ENCODE measurements at regions of chr9 and their contacts with region 1.

Region 1: DNA sequence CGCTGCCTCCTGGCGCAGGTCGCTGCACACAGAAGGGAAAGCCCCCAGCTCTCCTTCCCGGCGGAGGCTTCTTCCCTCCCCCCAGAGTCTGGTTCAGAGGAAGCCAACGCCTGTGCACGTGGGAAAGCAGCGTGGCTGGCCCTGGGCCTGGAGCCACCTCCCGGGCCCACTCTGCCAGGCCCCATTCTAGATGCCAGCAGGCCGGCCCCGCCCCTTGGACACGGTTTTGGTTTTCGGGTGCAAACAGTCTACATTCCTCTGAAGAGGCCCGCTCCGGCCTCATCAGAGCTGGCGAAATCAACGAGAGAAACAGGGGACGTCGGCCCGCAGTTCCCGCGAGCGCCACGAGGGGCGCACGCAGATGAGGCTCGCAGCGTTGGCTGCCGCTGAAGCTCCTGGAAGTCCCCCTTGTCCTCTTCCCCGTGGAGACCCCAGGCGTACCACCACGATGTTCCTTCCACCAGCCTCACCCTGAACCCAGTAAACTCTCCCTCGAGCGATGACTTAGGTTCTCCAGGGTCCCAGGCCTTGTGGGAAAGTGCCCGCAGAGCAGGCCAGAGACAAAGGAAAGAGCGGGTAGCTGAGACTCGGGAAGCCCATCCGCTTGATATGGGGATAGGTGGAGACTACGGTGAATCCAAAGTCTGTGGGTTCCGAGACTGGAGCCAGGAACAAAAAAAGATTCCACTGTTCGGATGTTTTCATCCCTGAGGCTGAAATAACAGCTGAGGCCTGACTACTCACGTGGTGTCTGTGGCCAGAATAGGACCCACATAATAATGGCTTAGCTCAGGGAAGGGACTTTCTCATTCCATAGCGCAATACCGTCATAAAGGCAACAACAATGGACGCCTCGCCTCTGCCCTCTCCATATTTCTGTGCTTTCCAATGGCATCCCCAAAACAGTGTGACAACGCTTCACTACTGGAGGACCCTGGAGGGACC is 64.2 kb downstream of the KLF4 start:
- H3K4me3 ChIP-seq: no peak overlapping the region
- H3K27ac ChIP-seq: no peak overlapping the region
- H3K4me1 ChIP-seq: 0 out of 2 replicates have a peak, but pooled peaks cover 2% of the 10 kb centered on the region
- CTCF ChIP-seq: 0 out of 2 replicates have a peak, but pooled peaks have one; percentile 22

Region 2: GRCh38 chr9:107413315-107413714 is 12.1 kb before region 1 on chr9:
- CTCF ChIA-PET with region 1: interaction called, 10 read pairs
- POLR2A ChIA-PET with region 1: no interaction called
- H3K4me3 ChIP-seq: no peak overlapping the region
- H3K27ac ChIP-seq: no peak overlapping the region
- H3K4me1 ChIP-seq: no peaks in the 10 kb centered on the region
- CTCF ChIP-seq: no peak

Region 3: GRCh38 chr9:107443786-107444185 is 18.4 kb after region 1 on chr9:
- CTCF ChIA-PET with region 1: interaction called, 20 read pairs
- POLR2A ChIA-PET with region 1: no interaction called
- H3K4me3 ChIP-seq: no peak overlapping the region
- H3K27ac ChIP-seq: no peak overlapping the region
- H3K4me1 ChIP-seq: no peaks in the 10 kb centered on the region
- CTCF ChIP-seq: no peak

Region 4: GRCh38 chr9:107484117-107484723 is 58.8 kb after region 1 on chr9:
- CTCF ChIA-PET with region 1: interaction called, 25 read pairs
- POLR2A ChIA-PET with region 1: interaction called, 5 read pairs
- H3K4me3 ChIP-seq: no peak overlapping the region
- H3K27ac ChIP-seq: no peak overlapping the region
- H3K4me1 ChIP-seq: peaks cover 4% of the 10 kb centered on the region; the same call in 1 of the 2 replicates
- CTCF ChIP-seq: no peak

Region 5: DNA sequence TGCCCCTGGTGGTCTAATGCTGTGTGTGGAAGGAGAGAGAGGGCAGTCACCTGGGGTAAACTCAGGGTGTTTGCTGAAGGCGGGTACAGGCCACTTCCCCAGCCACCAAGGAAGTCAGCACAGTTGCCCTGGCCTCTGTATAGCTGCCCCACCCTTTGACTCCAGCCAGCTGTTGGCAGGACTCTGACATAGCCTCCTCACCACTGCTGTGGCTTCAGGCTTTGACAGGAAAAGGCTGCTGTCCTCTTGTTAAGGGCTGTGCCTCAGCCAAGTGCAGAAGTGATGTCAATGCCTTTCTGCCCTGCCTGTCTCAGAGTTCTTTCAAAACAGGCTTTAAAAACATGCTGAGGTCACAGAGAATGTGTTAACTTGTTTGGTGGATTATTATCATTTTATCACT is 551.4 kb after region 1 on chr9:
- CTCF ChIA-PET with region 1: no interaction called
- POLR2A ChIA-PET with region 1: no interaction called
- H3K4me3 ChIP-seq: no peak overlapping the region
- H3K27ac ChIP-seq: no peak overlapping the region
- H3K4me1 ChIP-seq: no peaks in the 10 kb centered on the region
- CTCF ChIP-seq: no peak

Region 6: DNA sequence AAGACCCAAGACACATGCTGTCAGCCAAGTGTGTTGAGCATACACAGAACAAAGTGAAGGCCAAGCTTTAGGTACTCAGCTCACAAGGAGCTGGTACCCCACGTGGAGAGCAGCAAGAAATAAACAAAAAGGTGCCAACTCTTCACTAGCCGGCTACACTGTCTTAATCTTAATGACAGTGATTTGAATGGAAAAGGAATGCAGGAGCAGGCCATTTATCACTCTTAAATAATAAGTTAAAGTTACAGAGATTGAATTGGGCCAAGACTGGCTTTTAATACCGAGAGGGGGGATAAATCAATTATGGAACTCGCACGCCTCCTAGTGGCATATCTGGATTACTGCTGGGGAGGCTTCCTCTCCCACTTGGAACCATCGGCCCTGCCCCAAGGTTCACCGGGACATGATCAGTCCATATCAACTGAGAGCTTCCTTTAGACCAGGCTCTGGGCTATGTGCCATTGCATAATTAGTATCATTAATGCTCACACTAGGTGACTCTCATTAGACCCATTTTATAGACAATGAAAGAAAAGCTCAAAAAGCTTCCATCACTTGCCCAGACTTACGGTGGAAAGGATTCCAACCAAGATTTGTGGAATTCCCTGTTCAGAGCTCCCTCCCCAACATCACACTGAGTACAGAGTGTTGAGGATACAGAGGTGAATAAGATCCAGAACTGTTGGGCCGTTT is 1336.4 kb after region 1 on chr9:
- CTCF ChIA-PET with region 1: interaction called, 17 read pairs
- POLR2A ChIA-PET with region 1: no interaction called
- H3K4me3 ChIP-seq: no peak overlapping the region
- H3K27ac ChIP-seq: no peak overlapping the region
- H3K4me1 ChIP-seq: no peaks in the 10 kb centered on the region
- CTCF ChIP-seq: no peak